Astrocyte of the cerebellum (primary cell): ENCODE measurements at regions of chr7 and their contacts with region 1.

Region 1: DNA sequence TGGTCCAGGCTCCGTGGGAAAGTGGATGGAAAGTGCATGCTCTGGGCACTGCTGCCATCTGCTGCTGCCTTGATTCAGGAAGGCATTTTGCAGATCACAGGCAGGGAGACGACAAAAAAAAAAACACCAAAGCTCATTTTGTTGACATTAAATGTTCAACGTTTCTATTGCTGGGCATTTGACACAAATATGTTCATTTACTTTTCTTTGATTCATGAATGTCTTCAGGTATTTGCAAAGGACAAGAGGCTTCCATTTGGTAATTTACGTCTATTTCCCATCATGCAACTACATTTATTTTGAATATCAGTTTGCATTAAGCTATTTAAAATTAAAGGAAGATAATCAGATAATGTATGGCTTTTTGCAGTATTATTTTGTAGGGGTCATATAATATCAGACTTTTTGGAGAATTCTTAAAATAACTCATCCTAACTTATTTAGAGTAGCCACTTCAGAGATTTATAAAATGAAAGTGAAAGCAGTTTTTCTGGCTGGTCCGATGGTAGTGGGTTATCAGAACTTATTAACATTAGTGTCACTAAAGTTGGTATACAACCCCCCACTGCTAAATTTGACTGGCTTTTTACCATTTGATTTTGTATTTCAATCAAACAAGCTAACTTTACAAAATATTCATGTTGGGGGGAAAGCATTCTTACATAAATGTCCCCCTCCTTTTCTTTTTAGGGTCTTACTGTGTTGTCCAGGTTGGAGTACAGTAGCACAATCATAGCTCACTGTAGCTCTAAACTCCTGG is 65.3 kb downstream of the PDIA4 start:
- DNase-seq: no peak
- H3K4me3 ChIP-seq: peak overlapping the region; percentile 40
- CTCF ChIP-seq: peak; percentile 80

Region 2: DNA sequence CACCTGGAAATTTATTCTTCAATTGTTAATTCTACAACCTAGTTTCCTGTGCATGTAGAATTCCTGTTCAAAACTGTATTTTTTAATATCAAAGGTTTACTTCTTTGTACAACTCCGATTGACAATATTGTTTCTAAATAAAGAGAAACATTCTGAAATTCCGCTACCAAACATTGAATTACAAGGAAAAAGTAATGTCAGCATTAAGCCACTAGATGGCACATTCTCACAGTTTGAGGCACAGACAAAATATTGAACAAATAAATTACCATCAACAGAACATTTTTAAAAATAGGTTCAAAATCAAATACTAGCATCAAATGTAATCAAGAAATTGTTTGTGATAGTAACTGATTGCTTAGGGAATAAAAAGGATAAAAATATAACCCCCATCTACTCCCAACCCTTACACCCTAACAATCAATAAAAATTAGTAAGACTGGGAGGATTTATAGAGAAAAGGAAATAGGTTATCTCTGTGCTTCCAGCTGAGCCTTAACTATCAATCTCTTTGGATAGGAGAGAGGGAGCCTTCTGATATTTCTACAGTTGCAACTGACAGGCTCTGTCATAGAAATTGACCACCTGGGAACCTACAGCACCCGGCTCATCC is 459.0 kb before region 1 on chr7:
- in situ Hi-C with region 1: loop called (anchors 10 kb)
- DNase-seq: peak; percentile 24
- H3K4me3 ChIP-seq: no peak overlapping the region
- CTCF ChIP-seq: peak; percentile 43

Region 3: GRCh38 chr7:148575640-148576411 is 387.2 kb before region 1 on chr7:
- in situ Hi-C with region 1: loop called (anchors 25 kb)
- DNase-seq: peak; percentile 36
- H3K4me3 ChIP-seq: no peak overlapping the region
- CTCF ChIP-seq: peak; percentile 86